ENCODE measurements at regions of chr11 and their contacts with region 1.

Region 1: GRCh38 chr11:65711785-65712632 is at the start of gene KAT5:
- DNase-seq: peak; percentile 99
- H3K4me3 ChIP-seq: peak within 1 kb of the TSS; percentile 64 to 74
- H3K27ac ChIP-seq: peak within 1 kb of the TSS; percentile 98
- H3K4me1 ChIP-seq: peaks cover 12% of the 10 kb centered on the region
- H3K27me3 ChIP-seq: no peaks in the 10 kb centered on the region
- CTCF ChIP-seq: peak; percentile 99 to 100 (median 99)
- POLR2A ChIP-seq: peak; percentile 59
- total RNA-seq, gene KAT5: 101 to 121 TPM

Region 2: DNA sequence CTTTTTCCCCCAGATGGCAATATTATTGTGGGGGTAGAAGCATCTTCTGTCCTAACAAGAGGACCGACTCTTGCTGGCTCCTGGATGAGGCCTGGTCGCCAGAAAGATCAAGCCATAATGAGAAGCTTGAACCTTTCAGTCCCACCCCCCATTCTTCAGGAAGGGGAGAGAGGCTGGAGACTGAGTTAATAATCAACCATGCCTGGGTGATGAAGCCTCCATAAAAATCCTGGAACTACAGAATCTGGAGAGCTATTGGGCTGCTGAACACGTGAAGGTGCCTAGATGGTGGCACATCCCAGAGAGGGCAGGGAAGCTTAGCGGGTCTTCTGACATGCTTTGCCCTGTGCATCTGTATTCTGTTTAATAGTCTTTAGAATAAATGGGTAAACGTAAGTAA is 52.4 kb after region 1 on chr11:
- intact Hi-C with region 1: no loop called
- DNase-seq: no peak
- H3K4me3 ChIP-seq: no peak overlapping the region
- H3K27ac ChIP-seq: no peak overlapping the region
- H3K4me1 ChIP-seq: no peaks in the 10 kb centered on the region
- H3K27me3 ChIP-seq: no peaks in the 10 kb centered on the region
- CTCF ChIP-seq: no peak
- POLR2A ChIP-seq: no peak

Region 3: DNA sequence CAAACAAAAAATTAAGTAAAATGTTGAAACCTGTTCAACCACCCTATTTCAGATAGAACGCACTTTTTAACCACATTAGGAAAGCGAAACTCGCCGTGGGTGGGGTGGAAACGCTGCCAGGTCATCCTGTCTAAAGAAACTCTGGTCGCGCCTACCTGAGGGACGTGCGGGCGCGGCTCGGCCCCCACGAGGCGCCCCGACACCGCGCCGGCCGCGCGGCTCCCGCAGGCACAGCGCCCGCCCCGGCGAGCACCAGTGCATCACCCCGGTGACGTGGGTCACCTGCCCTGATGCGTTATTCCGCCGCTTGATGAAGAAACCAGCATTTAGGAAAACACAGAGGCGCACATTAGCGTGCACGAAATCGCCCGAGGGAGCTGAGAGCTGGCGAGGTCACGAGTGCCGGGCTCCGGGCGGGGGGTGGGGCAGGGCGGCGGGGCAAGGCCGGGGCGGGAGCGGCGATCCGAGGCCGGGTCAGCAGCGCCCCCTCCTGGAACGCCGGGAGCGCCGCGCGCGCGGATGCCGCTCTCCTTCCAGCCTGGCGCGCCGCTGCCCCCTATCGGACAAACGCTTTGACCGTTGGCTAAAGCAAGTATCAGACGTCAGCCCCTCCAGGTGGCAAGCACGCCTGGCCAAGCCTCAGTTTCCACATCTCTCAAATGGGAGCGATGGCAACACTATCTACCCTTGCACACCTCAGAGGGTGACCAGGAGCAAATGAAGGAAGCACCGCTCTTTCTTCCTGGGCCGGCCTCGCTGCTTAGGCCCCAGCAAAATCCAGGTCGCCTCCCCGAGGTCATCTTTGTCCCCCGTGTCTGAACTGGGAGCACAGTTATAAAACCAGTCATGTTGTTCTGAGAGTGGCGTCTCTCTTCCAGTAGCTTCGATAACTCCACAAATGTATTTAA is 106.1 kb after region 1 on chr11:
- intact Hi-C with region 1: loop called (anchors 5 kb)
- DNase-seq: peak; percentile 96
- H3K4me3 ChIP-seq: peak overlapping the region; percentile 67 to 76
- H3K27ac ChIP-seq: peak overlapping the region; percentile 59 to 82
- H3K4me1 ChIP-seq: peaks cover 7% of the 10 kb centered on the region
- H3K27me3 ChIP-seq: no peaks in the 10 kb centered on the region
- CTCF ChIP-seq: peak; percentile 91 to 99 (median 98)
- POLR2A ChIP-seq: no peak